H1 (cell line): ENCODE measurements at regions of chr20 and their contacts with region 1.

Region 1: GRCh38 chr20:23606652-23607049 is 934 bp upstream of the CST9 start:
- DNase-seq: peak; percentile 73 to 95
- H3K4me3 ChIP-seq: no peak overlapping the region
- H3K27ac ChIP-seq: no peak overlapping the region
- H3K4me1 ChIP-seq: peaks cover 0 to 7% (median 2%) of the 10 kb centered on the region in 4 experiments; a peak in 3 of 7 replicates
- H3K27me3 ChIP-seq: no peaks in the 10 kb centered on the region; a peak in 1 of 7 replicates
- CTCF ChIP-seq: peak; percentile 86 to 99 (median 96)
- EP300 ChIP-seq: no peak
- POLR2A ChIP-seq: no peak
- RAD21 ChIP-seq: peak; percentile 95 to 98

Region 2: GRCh38 chr20:23420943-23421931 is 185.4 kb before region 1 on chr20 and contains the start of gene NAPB:
- CTCF ChIA-PET with region 1: interaction called, 10 read pairs
- POLR2A ChIA-PET with region 1: no interaction called
- DNase-seq: peak; percentile 73 to 93
- H3K4me3 ChIP-seq: peak within 1 kb of the TSS; percentile 58 to 95 (median 75)
- H3K27ac ChIP-seq: no peak within 1 kb of the TSS
- H3K4me1 ChIP-seq: no peaks in the 10 kb centered on the region
- H3K27me3 ChIP-seq: no peaks in the 10 kb centered on the region
- CTCF ChIP-seq: peak; percentile 40 to 53 (median 42)
- EP300 ChIP-seq: no peak
- POLR2A ChIP-seq: peak in 1 of 2 experiments; percentile 73; a peak in 2 of 3 replicates
- RAD21 ChIP-seq: peak in 1 of 2 experiments; percentile 31; a peak in 2 of 4 replicates
- total RNA-seq, gene NAPB: 12.3 and 12.8 TPM in 2 replicates